ENCODE measurements at regions of chr19 and their contacts with region 1.

Region 1: GRCh38 chr19:18450931-18451845 is 13.3 kb upstream of the ISYNA1 start:
- DNase-seq: peak; percentile 95
- H3K4me3 ChIP-seq: peak overlapping the region in 1 of 2 experiments; percentile 50; a peak in 1 of 4 replicates
- H3K27ac ChIP-seq: no peak overlapping the region
- H3K4me1 ChIP-seq: peaks cover 2 to 4% of the 10 kb centered on the region in 2 experiments; a peak in 1 of 4 replicates
- H3K27me3 ChIP-seq: no peaks in the 10 kb centered on the region
- CTCF ChIP-seq: peak; percentile 95
- EP300 ChIP-seq: no peak
- RAD21 ChIP-seq: peak; percentile 89

Region 2: DNA sequence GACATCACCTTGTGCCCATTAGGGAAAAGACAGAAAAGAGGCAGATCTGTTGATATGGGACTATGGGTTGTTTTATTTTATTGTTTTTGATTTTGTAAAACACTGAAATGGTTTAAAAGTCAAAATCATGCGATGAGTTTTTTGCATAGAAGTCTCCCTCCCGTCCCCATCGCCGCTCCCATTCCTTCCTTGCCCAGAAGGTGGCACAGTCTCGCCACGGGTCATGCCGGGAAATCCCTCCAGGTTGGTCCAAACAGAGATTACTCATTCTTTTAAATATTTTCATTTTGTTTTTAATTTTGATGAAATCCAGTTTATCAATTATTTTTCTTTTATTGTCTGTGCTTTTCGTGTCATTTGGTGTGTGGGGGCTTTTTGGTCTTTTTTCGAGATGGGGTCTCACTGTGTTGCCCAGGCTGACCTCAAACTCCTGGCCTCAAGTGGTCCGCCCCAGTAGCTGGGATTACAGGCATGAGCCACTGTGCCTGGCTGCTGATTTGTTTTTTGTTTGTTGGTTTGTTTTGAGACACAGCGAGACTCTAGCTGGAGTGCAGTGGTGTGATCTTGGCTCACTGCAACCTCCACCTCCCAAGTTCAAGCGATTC is 101.6 kb before region 1 on chr19:
- CTCF ChIA-PET with region 1: no interaction called
- POLR2A ChIA-PET with region 1: no interaction called
- DNase-seq: peak; percentile 84
- H3K4me3 ChIP-seq: no peak overlapping the region
- H3K27ac ChIP-seq: no peak overlapping the region
- H3K4me1 ChIP-seq: no peaks in the 10 kb centered on the region
- H3K27me3 ChIP-seq: no peaks in the 10 kb centered on the region
- CTCF ChIP-seq: peak; percentile 96
- EP300 ChIP-seq: no peak
- RAD21 ChIP-seq: peak; percentile 95

Region 3: DNA sequence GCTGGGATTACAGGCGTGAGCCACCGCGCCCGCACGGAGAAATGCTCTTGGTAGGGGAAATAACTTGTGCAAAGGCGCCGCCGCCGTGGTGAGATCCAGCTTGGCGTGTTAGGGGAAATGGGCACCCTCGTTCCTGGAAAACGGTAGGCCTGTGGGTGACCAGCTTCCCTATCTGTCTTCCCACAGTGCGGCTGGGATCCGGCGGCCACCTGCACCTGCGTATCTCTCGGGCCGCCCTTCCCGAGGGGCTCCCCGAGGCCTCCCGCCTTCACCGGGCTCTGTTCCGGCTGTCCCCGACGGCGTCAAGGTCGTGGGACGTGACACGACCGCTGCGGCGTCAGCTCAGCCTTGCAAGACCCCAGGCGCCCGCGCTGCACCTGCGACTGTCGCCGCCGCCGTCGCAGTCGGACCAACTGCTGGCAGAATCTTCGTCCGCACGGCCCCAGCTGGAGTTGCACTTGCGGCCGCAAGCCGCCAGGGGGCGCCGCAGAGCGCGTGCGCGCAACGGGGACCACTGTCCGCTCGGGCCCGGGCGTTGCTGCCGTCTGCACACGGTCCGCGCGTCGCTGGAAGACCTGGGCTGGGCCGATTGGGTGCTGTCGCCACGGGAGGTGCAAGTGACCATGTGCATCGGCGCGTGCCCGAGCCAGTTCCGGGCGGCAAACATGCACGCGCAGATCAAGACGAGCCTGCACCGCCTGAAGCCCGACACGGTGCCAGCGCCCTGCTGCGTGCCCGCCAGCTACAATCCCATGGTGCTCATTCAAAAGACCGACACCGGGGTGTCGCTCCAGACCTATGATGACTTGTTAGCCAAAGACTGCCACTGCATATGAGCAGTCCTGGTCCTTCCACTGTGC is 62.9 kb before region 1 on chr19:
- CTCF ChIA-PET with region 1: interaction called, 10 read pairs
- POLR2A ChIA-PET with region 1: no interaction called
- DNase-seq: peak; percentile 98
- H3K4me3 ChIP-seq: peak overlapping the region; percentile 51 to 60; a peak in 3 of 4 replicates
- H3K27ac ChIP-seq: no peak overlapping the region
- H3K4me1 ChIP-seq: peaks cover 0 to 9% of the 10 kb centered on the region in 2 experiments; a peak in 1 of 4 replicates
- H3K27me3 ChIP-seq: no peaks in the 10 kb centered on the region
- CTCF ChIP-seq: peak; percentile 85
- EP300 ChIP-seq: no peak
- RAD21 ChIP-seq: peak; percentile 59

Region 4: DNA sequence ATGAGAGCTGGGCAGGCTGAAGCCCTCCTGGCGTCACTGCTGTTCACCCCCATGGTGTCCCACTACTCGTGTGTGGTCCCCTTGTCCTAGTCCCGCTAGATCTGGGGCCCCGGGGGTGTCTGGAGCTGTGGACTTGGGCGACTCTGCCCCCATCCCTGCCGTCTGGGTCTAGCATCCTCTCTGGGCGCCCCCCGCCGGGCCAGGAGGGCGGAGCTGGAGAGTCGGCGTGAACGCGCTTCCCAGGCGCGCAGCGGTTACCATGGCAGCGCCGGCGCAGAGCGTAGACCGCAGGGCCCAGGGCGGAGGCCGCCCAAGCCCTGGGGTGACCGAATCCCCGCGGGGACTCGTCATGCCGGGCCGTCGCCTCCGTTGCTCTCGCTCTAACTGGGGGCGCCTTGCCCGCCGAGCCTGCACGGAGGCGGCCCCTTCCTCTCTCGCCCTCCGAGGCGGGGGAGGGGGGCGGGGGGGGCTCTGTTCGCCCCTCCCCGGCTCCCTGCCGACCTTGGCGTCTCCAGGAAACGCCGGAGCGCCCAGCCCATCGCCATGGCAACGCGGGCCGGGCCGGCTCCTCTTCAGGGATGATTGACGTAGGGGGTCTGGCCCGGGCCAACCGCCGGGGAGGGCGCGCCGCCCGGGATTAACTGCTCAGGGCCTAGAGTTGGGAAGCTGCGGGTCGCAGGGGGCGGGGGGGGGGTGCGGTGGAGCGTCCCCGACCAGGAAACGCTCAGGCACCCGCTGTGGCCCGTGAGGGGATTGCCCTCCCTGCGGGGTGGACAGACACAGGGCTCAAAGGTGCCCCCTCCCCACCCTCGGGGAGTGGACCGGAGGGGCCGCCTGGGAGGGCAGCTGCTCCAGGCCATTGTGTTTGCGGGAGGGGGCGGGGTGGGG is 22.2 kb before region 1 on chr19:
- CTCF ChIA-PET with region 1: interaction called, 12 read pairs
- POLR2A ChIA-PET with region 1: no interaction called
- DNase-seq: peak; percentile 95
- H3K4me3 ChIP-seq: peak overlapping the region; percentile 38 to 43; a peak in 3 of 4 replicates
- H3K27ac ChIP-seq: peak overlapping the region; percentile 78 to 87
- H3K4me1 ChIP-seq: peaks cover 23 to 58% of the 10 kb centered on the region in 2 experiments; a peak in 2 of 4 replicates
- H3K27me3 ChIP-seq: no peaks in the 10 kb centered on the region
- CTCF ChIP-seq: no peak
- EP300 ChIP-seq: no peak
- RAD21 ChIP-seq: no peak

Region 5: DNA sequence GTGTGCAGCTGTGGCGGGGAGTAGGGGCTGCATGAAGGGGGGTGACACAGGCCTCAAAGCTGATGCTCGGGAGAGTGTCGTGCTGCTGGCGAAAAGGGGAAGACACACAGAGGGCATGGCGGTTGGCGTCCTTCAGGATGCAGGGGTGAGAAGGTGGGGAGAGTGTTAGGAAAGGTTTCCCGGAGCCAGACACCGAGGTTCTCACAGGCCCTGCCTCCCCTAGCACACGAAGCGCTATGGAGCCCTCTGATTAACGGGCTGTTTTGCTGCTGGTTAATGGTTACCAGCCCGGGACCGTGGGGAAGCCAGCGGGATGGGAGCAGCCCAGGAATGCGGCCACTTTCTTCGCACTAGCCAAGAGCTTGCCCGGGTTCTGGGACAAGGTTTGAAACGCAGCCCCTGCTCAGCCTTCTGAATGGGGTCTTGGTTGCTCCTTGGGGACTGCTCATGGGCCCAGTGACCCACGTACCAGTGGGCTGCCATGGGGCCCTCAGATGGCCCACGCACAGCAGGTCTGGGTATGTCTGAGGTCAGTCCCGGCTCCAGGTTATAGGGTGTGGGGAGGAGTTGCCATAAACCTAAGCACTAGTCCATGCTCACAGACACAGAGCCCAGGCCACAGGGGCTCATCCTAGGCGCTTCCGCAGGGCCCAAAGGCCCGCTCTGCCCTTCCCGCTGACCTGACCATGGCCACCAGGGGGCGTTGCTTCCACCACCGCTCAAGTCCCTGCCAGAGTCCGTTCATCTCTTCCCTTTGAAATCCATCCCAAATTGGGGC is 18.1 kb after region 1 on chr19:
- CTCF ChIA-PET with region 1: interaction called, 215 read pairs
- POLR2A ChIA-PET with region 1: interaction called, 3 read pairs
- DNase-seq: peak; percentile 82
- H3K4me3 ChIP-seq: no peak overlapping the region; a peak in 1 of 4 replicates
- H3K27ac ChIP-seq: no peak overlapping the region
- H3K4me1 ChIP-seq: peaks cover 0 to 5% of the 10 kb centered on the region in 2 experiments; a peak in 1 of 4 replicates
- H3K27me3 ChIP-seq: no peaks in the 10 kb centered on the region
- CTCF ChIP-seq: peak; percentile 84
- EP300 ChIP-seq: no peak
- RAD21 ChIP-seq: peak; percentile 59

Region 6: DNA sequence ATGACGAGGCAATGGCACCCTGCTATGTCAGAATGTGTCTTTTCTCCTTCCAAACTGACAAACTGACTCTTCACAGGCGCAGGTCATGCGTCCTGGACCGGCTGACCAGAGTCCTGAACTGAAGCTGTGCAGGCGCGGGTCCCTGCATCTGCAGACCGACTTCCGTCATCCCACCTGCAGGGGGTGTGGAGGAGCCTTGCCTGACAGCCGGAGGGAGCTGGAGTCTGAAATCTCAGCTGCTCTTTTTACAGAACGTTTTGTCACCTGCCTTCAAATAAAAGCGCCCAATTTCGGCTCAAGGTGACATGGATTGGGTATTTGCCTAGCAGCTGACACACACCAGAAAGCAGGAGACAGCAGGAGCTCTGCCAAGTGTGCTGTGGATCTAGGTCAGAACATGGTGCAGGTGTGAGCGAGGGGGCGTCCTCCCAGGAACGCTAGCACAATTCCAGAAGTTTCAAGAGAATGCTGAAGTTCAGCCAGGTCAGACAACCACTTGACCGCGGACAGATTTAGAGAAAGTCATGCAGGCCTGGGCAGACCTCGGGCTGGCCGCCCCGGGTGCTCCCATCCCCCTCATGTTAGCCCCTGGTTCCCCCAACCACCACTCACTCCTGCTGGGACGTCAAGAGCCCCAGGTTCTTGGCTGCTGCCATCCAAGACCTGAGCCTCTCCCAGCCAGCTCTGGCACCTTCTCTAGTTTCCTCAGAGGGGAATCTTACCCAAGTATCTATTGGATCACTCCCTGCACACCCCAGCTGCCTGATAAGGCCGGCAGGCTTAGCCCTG is 37.8 kb after region 1 on chr19:
- CTCF ChIA-PET with region 1: interaction called, 18 read pairs
- POLR2A ChIA-PET with region 1: no interaction called
- DNase-seq: peak; percentile 78
- H3K4me3 ChIP-seq: no peak overlapping the region
- H3K27ac ChIP-seq: no peak overlapping the region
- H3K4me1 ChIP-seq: peaks cover 14 to 51% of the 10 kb centered on the region in 2 experiments; a peak in 2 of 4 replicates
- H3K27me3 ChIP-seq: no peaks in the 10 kb centered on the region
- CTCF ChIP-seq: peak; percentile 26
- EP300 ChIP-seq: no peak
- RAD21 ChIP-seq: peak; percentile 65

Region 7: DNA sequence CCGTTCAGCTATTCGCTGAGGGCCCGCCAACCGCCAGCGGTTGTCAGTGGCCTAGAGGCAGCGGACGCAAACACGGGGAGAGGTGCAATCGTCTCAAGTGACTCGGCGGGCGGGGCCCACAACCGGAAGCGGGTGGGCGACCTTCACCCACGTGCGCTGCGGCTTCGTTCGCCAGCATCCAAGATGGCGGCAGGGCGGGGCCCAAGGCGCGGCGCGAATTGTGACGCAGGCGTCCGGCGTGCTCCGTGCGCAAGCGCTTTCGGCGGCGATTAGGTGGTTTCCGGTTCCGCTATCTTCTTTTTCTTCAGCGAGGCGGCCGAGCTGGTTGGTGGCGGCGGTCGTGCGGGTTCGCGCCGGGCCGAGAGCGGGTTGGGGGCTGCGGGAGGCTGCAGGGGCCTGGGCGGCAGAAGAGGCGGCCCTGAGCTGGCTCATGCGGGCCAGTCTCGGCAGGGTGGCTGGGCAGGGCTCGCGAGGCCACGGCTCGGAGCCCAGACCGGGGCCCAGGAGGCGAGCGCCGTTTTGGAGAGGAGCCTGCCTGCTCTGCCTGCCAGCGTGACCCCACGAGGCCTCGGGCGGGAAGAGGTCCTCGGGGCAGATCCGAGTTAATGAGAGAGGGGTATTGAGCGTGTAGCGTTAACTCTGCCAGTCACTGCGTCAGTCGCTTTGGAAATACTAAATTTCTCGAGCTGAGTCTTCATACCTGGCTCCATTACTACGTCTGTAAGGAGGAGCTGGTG is 120.5 kb after region 1 on chr19 and contains the start of gene UBA52:
- CTCF ChIA-PET with region 1: interaction called, 11 read pairs
- POLR2A ChIA-PET with region 1: no interaction called
- DNase-seq: peak; percentile 96
- H3K4me3 ChIP-seq: peak within 1 kb of the TSS; percentile 64 to 86
- H3K27ac ChIP-seq: peak within 1 kb of the TSS; percentile 74 to 76
- H3K4me1 ChIP-seq: peaks cover 10 to 16% of the 10 kb centered on the region in 2 experiments; a peak in 3 of 4 replicates
- H3K27me3 ChIP-seq: no peaks in the 10 kb centered on the region
- CTCF ChIP-seq: no peak
- EP300 ChIP-seq: no peak; a peak in 1 of 4 replicates
- RAD21 ChIP-seq: no peak
- polyA plus RNA-seq, gene UBA52: 2,690 and 3,026 TPM in 2 replicates